ENCODE measurements at regions of chr4 and their contacts with region 1.

Region 1: DNA sequence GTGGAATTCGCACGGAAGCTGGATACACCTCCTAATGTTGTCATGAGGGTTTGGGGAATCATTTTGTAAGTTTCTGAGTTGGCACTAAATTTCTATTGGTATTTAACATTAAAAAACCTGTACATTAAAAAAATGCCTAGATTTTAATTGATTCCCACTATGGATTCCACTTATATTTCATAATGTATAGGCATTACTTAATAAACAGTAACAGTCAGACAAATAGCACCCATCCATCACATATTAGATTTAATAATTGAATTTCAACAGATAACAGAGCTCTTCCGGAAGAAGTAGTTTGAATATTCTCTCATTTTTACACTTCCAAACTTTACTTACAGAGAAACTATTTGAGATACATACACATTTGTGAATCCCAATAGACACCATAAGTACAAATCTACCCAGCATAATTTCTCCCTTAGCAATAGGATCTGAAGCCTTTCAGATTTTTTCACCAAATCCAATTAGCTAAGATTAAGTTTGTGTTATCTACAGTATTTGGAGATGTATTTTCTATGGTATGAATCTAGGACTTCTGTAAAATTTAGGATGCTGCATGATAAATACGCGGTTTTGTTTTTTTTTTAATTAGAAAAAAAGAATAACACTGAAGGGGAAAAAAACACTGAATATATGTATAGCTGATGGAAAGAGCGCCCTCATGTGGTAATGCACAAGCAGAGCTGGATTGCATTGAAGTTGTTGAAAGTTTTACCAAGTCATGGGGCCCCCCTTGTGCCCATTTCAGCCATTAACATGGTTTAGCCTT is 12.2 kb upstream of the ODAM start:
- DNase-seq: peak in 2 of 9 donors; percentile 1 to 5
- ATAC-seq: no peak
- H3K4me3 ChIP-seq: no peak overlapping the region
- H3K4me3 Mint-ChIP-seq: no peak overlapping the region
- H3K27ac ChIP-seq: no peak overlapping the region
- H3K27ac Mint-ChIP-seq: no peak overlapping the region
- H3K4me1 ChIP-seq: no peaks in the 10 kb centered on the region
- H3K4me1 Mint-ChIP-seq: no peaks in the 10 kb centered on the region
- H3K27me3 ChIP-seq: no peaks in the 10 kb centered on the region
- H3K27me3 Mint-ChIP-seq: peaks cover 0 to 5% (median 2%) of the 10 kb centered on the region in 5 donors

Region 2: GRCh38 chr4:69322055-69322454 is 861.3 kb before region 1 on chr4:
- CTCF ChIA-PET with region 1: no interaction called
- POLR2A ChIA-PET with region 1: no interaction called
- intact Hi-C with region 1: loop called in 1 of 2 experiments (anchors 2 kb)
- DNase-seq: no peak
- ATAC-seq: peak; percentile 66
- H3K4me3 ChIP-seq: no peak overlapping the region
- H3K4me3 Mint-ChIP-seq: no peak overlapping the region
- H3K27ac ChIP-seq: no peak overlapping the region
- H3K27ac Mint-ChIP-seq: no peak overlapping the region
- H3K4me1 ChIP-seq: no peaks in the 10 kb centered on the region
- H3K4me1 Mint-ChIP-seq: no peaks in the 10 kb centered on the region
- H3K27me3 ChIP-seq: no peaks in the 10 kb centered on the region
- H3K27me3 Mint-ChIP-seq: peaks cover 0 to 3% (median 0%) of the 10 kb centered on the region in 5 donors

Region 3: DNA sequence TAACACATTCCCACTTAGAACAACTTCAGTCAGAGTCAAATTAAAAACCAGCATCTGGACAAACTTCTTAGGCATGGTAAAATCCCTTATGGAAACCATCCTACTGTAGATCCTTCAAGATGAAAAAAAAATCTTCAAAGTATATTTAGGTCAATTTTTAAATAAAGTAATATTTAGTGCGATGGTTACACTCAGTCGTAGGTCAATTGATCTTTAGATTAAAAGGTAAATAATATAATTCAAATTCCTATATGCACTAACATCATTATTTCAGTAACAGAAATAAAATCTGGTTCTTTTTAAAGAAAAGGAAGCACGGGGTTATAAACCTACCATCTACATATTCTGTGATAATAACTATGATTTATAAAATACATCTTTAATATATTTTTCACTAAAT is 543.8 kb before region 1 on chr4 and contains the start of gene UGT2A2:
- CTCF ChIA-PET with region 1: no interaction called
- POLR2A ChIA-PET with region 1: no interaction called
- intact Hi-C with region 1: no loop called
- DNase-seq: no peak
- ATAC-seq: no peak
- H3K4me3 ChIP-seq: no peak within 1 kb of the TSS
- H3K4me3 Mint-ChIP-seq: no peak within 1 kb of the TSS
- H3K27ac ChIP-seq: no peak within 1 kb of the TSS
- H3K27ac Mint-ChIP-seq: no peak within 1 kb of the TSS
- H3K4me1 ChIP-seq: no peaks in the 10 kb centered on the region
- H3K4me1 Mint-ChIP-seq: no peaks in the 10 kb centered on the region
- H3K27me3 ChIP-seq: no peaks in the 10 kb centered on the region
- H3K27me3 Mint-ChIP-seq: no peaks in the 10 kb centered on the region
- total RNA-seq, gene UGT2A2: not detected

Measured in naive thymus-derived CD4-positive, alpha-beta T cell (primary cell).